ENCODE measurements at regions of chr6 and their contacts with region 1.

Region 1: DNA sequence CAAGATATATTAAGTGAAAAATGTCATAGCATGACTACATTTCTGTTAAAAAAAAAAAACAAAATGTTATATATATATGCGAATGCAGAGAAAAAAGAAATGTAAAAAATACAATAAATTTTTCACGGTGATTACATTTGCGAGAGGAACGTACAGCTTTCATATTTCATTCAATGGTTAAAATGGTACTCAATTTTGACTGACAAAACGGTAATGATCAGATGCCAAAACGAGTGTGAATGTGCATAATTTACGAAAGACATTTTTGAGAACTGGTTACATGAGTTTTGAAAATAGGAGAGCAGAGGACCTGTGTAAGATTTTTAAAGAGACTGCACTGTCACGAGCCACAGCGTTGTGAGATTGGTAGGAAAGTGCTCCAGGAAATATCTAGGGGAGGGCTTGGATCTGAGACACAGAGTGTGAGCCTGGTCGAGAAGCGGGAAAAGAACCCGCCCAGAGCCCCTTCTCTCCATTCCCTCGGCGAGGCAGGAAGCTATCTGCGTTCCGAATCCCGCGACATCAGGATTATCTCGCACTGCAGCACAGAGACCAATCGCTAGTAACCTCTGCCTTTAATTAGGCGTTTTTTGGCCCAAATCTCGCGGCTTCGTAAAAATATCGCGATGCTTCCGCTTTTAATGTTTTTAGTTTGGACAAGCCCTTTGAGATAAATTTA is 28.5 kb downstream of the TRIM27 start:
- DNase-seq: peak; percentile 97
- ATAC-seq: peak; percentile 84
- H3K4me3 Mint-ChIP-seq: peak overlapping the region; percentile 92
- H3K27ac Mint-ChIP-seq: peak overlapping the region; percentile 98
- H3K4me1 Mint-ChIP-seq: peaks cover 12% of the 10 kb centered on the region
- H3K27me3 Mint-ChIP-seq: peaks cover 6% of the 10 kb centered on the region

Region 2: DNA sequence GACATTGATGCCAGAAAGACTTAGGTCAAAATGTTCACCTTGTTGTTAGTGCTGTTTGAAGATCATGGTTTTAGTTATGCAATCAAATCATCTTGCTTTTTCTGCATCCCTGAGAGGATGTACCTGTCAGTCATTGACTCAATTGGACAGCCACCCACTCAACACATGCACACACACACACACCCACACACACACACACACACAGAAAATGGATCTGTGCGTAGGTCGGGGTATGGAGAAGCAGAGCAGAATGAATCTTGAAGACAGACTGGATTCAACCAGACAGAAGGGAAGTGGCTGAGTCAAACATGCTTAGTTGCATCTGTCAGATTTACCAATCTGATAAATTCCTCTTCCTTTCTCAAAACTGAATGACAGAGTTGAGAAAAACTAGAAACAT is 432.9 kb before region 1 on chr6:
- CTCF ChIA-PET with region 1: no interaction called
- POLR2A ChIA-PET with region 1: no interaction called
- DNase-seq: peak; percentile 47
- ATAC-seq: peak; percentile 58
- H3K4me3 Mint-ChIP-seq: no peak overlapping the region
- H3K27ac Mint-ChIP-seq: no peak overlapping the region
- H3K4me1 Mint-ChIP-seq: peaks cover 9% of the 10 kb centered on the region
- H3K27me3 Mint-ChIP-seq: peaks cover 65% of the 10 kb centered on the region

Region 3: DNA sequence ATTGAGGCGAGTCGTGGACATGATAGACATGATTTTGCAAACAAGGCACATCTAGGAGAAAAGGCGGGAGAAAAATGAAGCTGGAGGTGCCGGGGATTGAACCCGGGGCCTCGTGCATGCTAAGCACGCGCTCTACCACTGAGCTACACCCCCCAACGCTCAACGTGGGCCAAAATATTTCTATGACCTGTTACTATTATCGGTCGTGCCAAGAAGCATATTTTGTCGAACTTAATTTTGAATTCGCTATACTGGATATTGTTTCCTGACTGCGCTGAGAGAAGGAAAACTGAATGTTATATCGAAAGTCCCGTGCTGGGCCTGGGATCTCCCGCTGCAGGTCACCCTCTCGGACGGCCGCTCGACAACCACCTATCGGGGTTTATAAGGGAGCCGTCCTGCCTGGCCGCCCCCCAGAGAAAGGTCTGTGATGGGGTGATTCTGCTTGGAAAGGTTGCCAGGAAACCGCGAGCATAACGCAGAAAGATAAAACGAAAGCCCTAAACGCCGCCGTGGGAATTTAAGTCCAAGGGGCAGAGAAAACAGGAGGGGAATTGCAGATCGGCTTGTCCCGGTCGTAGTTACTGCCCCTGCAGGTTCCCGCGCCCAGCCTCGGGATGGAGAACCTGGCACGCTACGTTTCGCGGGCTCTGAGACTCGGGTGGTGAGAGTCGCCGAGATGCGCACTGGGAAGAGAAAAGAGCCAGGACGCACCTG is 31.5 kb before region 1 on chr6:
- CTCF ChIA-PET with region 1: interaction called, 5 read pairs
- POLR2A ChIA-PET with region 1: interaction called, 35 read pairs
- DNase-seq: peak; percentile 90
- ATAC-seq: peak; percentile 47
- H3K4me3 Mint-ChIP-seq: peak overlapping the region; percentile 89
- H3K27ac Mint-ChIP-seq: peak overlapping the region; percentile 81
- H3K4me1 Mint-ChIP-seq: peaks cover 53% of the 10 kb centered on the region
- H3K27me3 Mint-ChIP-seq: peaks cover 7% of the 10 kb centered on the region

Region 4: DNA sequence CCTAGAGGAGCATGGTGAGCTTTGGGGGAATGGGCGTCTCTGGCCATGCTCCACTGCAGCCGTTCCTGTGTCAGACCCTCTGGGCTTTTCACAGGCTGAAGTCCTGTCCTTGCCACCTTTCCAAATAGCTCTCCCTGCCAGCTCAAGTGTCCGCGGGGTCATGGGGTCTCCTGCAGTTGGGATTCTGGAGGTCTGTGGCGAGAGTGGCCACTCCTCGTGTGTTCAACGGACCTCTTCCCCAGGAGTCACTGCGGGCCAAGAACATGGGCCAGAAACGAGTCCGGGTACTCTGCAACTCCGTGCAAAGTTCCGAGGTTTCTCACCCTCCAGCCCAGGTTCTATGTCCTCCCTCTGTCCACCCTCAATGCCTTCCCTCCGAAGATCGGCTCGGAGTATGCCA is 187.2 kb after region 1 on chr6:
- CTCF ChIA-PET with region 1: no interaction called
- POLR2A ChIA-PET with region 1: no interaction called
- DNase-seq: no peak
- ATAC-seq: no peak
- H3K4me3 Mint-ChIP-seq: no peak overlapping the region
- H3K27ac Mint-ChIP-seq: no peak overlapping the region
- H3K4me1 Mint-ChIP-seq: no peaks in the 10 kb centered on the region
- H3K27me3 Mint-ChIP-seq: peaks cover 2% of the 10 kb centered on the region

Measured in activated CD8-positive, alpha-beta T cell treated with anti-CD3 and anti-CD28 coated beads, Interleukin-2, amount 10 ng/mL, durations not matched to agents 7 days and 5 days (primary cell).